HepG2 (cell line): ENCODE measurements at regions of chr20 and their contacts with region 1.

Region 1: GRCh38 chr20:18276821-18277220 is 11.5 kb upstream of the ZNF133 start:
- DNase-seq: peak; percentile 75
- ATAC-seq: peak; percentile 95
- H3K4me3 ChIP-seq: no peak overlapping the region
- H3K27ac ChIP-seq: no peak overlapping the region
- H3K4me1 ChIP-seq: peaks cover 10% of the 10 kb centered on the region
- H3K27me3 ChIP-seq: peaks cover 0 to 18% of the 10 kb centered on the region in 2 experiments; a peak in 1 of 5 replicates
- CTCF ChIP-seq: peak; percentile 98
- EP300 ChIP-seq: no peak
- POLR2A ChIP-seq: no peak
- RAD21 ChIP-seq: peak; percentile 92

Region 2: DNA sequence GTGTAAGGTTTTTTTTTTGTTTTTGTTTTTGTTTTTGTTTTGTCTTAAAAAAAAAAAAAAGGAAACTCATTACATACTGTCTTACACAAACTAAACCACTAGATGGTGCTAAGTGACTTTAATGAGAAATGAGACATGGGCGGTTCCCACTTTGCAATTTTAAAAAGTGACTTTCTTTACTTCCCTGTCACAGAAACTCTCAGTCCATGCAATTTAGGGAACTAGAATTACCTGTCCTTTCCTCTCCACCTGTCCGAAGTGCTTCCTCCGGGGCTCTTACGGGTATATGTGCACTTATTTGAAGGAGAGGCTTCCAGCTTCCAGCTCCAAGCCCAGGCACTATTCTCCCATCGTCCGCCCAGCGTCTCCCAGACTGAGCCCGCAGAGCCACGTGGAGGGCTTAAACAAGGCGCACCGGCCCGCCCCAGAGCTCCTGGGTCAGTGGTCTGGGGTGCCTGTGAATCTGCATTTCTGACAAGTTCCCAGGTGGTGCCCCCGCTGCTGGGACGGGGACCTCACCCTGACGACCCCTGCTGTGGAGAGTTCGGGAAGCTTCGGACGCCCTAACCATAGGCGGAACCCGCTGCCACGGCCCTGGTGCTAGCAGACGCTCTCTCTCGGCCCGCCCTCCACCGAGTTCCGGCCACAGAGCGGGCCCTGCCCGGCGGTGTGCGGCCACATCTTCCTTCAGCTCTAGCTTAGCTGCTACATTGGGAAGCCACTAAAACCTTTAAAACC is 771.8 kb before region 1 on chr20:
- CTCF ChIA-PET with region 1: interaction called, 22 read pairs
- POLR2A ChIA-PET with region 1: no interaction called
- in situ Hi-C with region 1: loop called (anchors 25 kb)
- intact Hi-C with region 1: loop called (anchors 1 kb)
- DNase-seq: peak; percentile 64
- ATAC-seq: peak; percentile 86
- H3K4me3 ChIP-seq: peak overlapping the region; percentile 35 to 74 (median 51)
- H3K27ac ChIP-seq: no peak overlapping the region
- H3K4me1 ChIP-seq: peaks cover 19% of the 10 kb centered on the region
- H3K27me3 ChIP-seq: peaks cover 1 to 74% of the 10 kb centered on the region in 2 experiments; a peak in 4 of 5 replicates
- CTCF ChIP-seq: peak; percentile 79
- EP300 ChIP-seq: no peak
- POLR2A ChIP-seq: no peak
- RAD21 ChIP-seq: peak; percentile 69

Region 3: GRCh38 chr20:18005231-18006109 is 271.4 kb before region 1 on chr20:
- CTCF ChIA-PET with region 1: no interaction called
- POLR2A ChIA-PET with region 1: no interaction called
- in situ Hi-C with region 1: no loop called
- intact Hi-C with region 1: loop called (anchors 5 kb)
- DNase-seq: no peak
- ATAC-seq: peak; percentile 45
- H3K4me3 ChIP-seq: peak overlapping the region in 1 of 3 experiments; percentile 44; a peak in 2 of 6 replicates
- H3K27ac ChIP-seq: no peak overlapping the region
- H3K4me1 ChIP-seq: peaks cover 73% of the 10 kb centered on the region
- H3K27me3 ChIP-seq: peaks cover 7 to 41% of the 10 kb centered on the region in 2 experiments; a peak in 4 of 5 replicates
- CTCF ChIP-seq: peak; percentile 13; the same call in 1 of the 2 replicates
- EP300 ChIP-seq: no peak
- POLR2A ChIP-seq: no peak
- RAD21 ChIP-seq: no peak

Region 4: GRCh38 chr20:18066421-18067336 is 210.1 kb before region 1 on chr20:
- CTCF ChIA-PET with region 1: interaction called, 8 read pairs
- POLR2A ChIA-PET with region 1: no interaction called
- in situ Hi-C with region 1: loop called (anchors 25 kb)
- intact Hi-C with region 1: loop called (anchors 1 kb)
- DNase-seq: peak; percentile 35
- ATAC-seq: no peak
- H3K4me3 ChIP-seq: no peak overlapping the region
- H3K27ac ChIP-seq: no peak overlapping the region
- H3K4me1 ChIP-seq: no peaks in the 10 kb centered on the region
- H3K27me3 ChIP-seq: peaks cover 2 to 15% of the 10 kb centered on the region in 2 experiments; a peak in 4 of 5 replicates
- CTCF ChIP-seq: peak; percentile 16; the same call in 1 of the 2 replicates
- EP300 ChIP-seq: no peak
- POLR2A ChIP-seq: no peak
- RAD21 ChIP-seq: no peak

Region 5: GRCh38 chr20:18258126-18258860 is 18.5 kb before region 1 on chr20:
- CTCF ChIA-PET with region 1: interaction called, 9 read pairs
- POLR2A ChIA-PET with region 1: no interaction called
- in situ Hi-C with region 1: no loop called
- intact Hi-C with region 1: loop called (anchors 1 kb)
- DNase-seq: peak; percentile 39
- ATAC-seq: peak; percentile 82
- H3K4me3 ChIP-seq: no peak overlapping the region
- H3K27ac ChIP-seq: no peak overlapping the region
- H3K4me1 ChIP-seq: no peaks in the 10 kb centered on the region
- H3K27me3 ChIP-seq: peaks cover 0 to 27% of the 10 kb centered on the region in 2 experiments; a peak in 3 of 5 replicates
- CTCF ChIP-seq: peak; percentile 66
- EP300 ChIP-seq: no peak
- POLR2A ChIP-seq: no peak
- RAD21 ChIP-seq: peak; percentile 60